Kidney (tissue), 22 donors: ENCODE measurements at regions of chr19 and their contacts with region 1.

Region 1: DNA sequence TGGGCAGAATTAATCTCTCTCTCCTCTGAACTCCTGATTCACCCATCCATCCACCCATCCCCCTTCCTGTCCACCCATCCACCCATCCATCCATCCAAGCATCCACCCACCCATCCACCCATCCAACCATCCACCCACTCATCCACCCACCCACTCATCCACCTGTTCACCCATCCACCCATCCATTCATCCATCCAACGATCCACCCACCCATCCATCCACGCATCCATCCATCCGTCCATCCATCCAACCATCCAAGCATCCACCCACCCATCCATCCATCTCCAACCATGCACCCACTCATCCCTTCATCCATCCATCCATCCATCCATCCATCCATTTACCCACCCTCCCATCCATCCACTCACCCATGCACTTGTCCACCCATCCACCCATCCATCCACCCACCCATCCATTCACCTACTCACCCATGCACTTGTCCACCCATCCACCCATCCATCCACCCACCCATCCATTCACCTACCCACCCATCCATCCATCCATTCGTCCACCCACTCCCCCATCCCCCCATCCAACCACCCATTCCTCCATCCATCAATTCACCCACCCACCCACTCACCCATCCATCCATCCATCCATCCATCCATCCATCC is 18.7 kb downstream of the MEX3D start:
- DNase-seq: no peak
- H3K4me3 ChIP-seq: no peak overlapping the region
- H3K27ac ChIP-seq: no peak overlapping the region
- H3K4me1 ChIP-seq: no peaks in the 10 kb centered on the region
- H3K27me3 ChIP-seq: peaks cover 3% of the 10 kb centered on the region
- CTCF ChIP-seq: no peak

Region 2: DNA sequence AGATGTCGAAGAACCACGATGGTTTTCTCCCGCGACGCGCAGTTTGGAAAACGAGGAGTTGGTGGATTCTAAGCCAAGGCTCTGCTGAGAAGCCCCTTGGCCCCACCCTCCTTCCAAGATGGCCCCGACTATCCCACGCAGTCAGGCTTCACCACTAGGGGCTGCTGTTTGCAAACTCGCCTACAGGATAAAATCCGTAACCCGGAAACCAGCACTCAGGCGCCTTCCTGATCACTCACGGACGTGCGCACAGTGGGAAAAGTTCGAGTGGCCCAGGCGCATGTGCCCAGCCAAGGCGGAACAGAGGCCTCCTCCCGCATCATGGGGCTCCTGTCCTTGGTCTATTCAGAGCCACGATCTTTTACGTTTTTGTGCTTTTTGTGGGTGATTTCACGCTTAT is 75.0 kb after region 1 on chr19:
- intact Hi-C with region 1: no loop called
- DNase-seq: peak in 3 of 5 donors; percentile 55 to 72 (median 60)
- H3K4me3 ChIP-seq: no peak overlapping the region
- H3K27ac ChIP-seq: no peak overlapping the region
- H3K4me1 ChIP-seq: no peaks in the 10 kb centered on the region
- H3K27me3 ChIP-seq: no peaks in the 10 kb centered on the region
- CTCF ChIP-seq: peak; percentile 70

Region 3: DNA sequence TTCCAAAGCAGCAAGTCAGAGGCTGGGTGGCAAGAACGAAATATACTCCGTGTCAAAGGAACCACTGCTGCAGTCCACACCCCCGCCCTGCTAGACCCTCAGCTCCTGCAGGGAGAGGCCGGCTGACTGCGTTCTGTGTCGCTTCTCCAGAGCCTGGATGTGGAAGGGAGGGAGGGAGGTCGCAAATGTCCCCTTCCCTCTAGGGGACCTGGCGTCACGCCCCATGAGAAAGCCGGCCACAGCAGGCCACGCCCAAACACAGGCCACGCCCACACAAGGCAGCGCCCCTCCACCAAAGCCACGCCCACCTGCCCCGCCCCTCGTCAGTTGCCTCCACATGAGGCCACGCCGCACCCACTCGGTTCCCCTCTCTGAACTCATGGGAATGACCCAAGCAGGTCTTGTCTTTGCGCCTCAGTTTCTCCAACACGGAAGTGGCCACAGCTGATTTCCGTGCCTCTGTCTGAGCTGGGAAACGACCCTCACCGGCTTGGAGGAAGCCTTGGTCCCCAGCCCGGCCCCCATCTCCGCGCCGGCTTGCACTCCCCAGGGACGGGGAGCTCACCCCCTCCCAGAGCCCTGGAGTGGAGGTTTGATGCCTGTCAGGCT is 141.4 kb after region 1 on chr19:
- intact Hi-C with region 1: no loop called
- DNase-seq: peak in 3 of 5 donors; percentile 30 to 77 (median 37)
- H3K4me3 ChIP-seq: no peak overlapping the region
- H3K27ac ChIP-seq: no peak overlapping the region
- H3K4me1 ChIP-seq: no peaks in the 10 kb centered on the region
- H3K27me3 ChIP-seq: peaks cover 8% of the 10 kb centered on the region
- CTCF ChIP-seq: no peak

Region 4: GRCh38 chr19:1767464-1767933 is 218.1 kb after region 1 on chr19:
- intact Hi-C with region 1: loop called (anchors 5 kb)
- DNase-seq: peak in 4 of 5 donors; percentile 37 to 75 (median 64)
- H3K4me3 ChIP-seq: no peak overlapping the region
- H3K27ac ChIP-seq: no peak overlapping the region
- H3K4me1 ChIP-seq: no peaks in the 10 kb centered on the region
- H3K27me3 ChIP-seq: peaks cover 32% of the 10 kb centered on the region
- CTCF ChIP-seq: peak; percentile 86